ENCODE measurements at regions of chr4 and their contacts with region 1.

Region 1: DNA sequence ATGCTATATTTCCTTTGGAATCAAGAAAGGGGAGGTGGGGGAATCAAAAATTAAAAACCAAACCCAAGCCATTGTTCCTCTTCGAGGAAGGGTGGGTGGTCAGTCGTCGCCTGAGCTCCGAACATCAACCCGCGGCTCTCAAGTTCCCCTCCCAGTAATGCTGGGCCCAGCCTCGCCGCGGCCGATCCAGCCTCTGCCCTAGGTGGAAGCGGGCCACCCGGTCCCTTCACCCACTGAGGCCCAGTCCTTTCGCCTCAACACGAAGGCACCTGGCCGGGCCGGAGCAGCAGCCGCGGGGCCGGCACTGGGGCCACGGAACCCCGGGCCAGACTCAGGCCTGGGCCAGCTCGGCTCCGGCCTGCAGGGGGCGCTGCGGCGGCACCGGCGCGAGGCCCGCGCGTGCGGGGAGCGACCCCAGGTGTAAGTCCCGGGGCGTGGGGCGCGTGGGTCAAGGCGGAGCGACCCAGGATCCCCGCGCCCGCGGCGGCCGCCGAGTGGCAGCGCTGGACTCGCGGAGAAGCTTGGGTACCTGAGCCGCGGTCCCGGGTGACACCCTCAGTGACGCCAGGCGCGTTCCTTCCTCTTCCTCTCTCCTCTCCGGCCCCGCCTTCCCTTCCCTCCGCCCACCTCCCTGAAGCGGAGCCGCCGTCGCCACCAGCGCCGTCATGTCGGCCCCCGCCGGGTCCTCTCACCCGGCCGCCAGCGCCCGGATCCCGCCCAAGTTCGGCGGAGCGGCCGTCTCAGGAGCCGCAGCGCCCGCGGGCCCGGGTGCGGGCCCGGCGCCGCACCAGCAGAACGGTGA is at the start of gene SEC24B:
- DNase-seq: peak; percentile 89 to 93 (median 90)
- H3K4me3 ChIP-seq: peak within 1 kb of the TSS; percentile 44 to 75
- H3K4me3 Mint-ChIP-seq: peak within 1 kb of the TSS; percentile 88 to 95 (median 92)
- H3K27ac ChIP-seq: peak within 1 kb of the TSS; percentile 79
- H3K27ac Mint-ChIP-seq: peak within 1 kb of the TSS; percentile 92 to 98 (median 95)
- H3K4me1 ChIP-seq: peaks cover 49% of the 10 kb centered on the region
- H3K4me1 Mint-ChIP-seq: peaks cover 31 to 59% (median 45%) of the 10 kb centered on the region in 4 donors
- H3K27me3 ChIP-seq: no peaks in the 10 kb centered on the region
- H3K27me3 Mint-ChIP-seq: no peaks in the 10 kb centered on the region
- total RNA-seq, gene SEC24B: 37.0 to 37.7 TPM

Region 2: GRCh38 chr4:108906006-108906405 is 527.4 kb before region 1 on chr4:
- CTCF ChIA-PET with region 1: no interaction called
- POLR2A ChIA-PET with region 1: no interaction called
- intact Hi-C with region 1: no loop called
- DNase-seq: no peak
- H3K4me3 ChIP-seq: no peak overlapping the region
- H3K4me3 Mint-ChIP-seq: no peak overlapping the region
- H3K27ac ChIP-seq: no peak overlapping the region
- H3K27ac Mint-ChIP-seq: no peak overlapping the region
- H3K4me1 ChIP-seq: no peaks in the 10 kb centered on the region
- H3K4me1 Mint-ChIP-seq: peaks cover 0 to 8% (median 3%) of the 10 kb centered on the region in 4 donors
- H3K27me3 ChIP-seq: no peaks in the 10 kb centered on the region
- H3K27me3 Mint-ChIP-seq: peaks cover 2 to 3% of the 10 kb centered on the region in 2 donors

Region 3: DNA sequence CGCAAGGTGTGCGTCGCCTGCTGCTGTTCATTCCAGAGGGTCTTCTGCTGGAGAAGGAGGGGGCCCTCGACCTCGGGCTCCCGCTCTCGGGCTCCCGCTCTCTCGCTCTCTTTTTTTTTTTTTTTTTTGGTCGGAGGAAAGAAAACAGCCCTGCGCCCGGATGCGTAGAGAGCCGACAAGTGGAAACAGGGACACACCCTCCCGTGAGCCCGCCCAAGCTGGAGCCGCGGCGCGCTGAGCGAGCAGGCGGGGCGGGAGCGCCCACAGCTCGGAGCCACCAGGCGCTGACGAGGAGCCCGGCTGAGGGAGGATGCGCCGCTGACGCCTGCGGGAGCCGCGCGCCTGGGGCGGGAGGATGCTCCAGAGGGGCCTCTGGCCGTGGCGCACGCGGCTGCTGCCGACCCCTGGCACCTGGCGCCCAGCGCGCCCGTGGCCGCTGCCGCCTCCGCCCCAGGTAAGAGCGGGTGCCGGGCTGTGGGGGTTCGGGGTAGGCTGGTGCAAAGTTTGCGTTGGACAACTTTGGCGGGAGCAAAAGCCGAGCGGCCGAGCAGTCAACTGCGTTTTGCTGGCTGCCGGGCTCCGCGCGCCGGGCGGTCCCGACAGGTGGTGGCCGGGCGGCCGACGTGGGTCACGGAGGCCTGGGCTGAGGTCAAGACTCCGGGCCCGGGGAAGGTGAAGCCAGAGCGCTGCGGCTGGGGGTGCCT is 126.7 kb after region 1 on chr4 and contains the start of gene MCUB:
- CTCF ChIA-PET with region 1: interaction called, 13 read pairs
- POLR2A ChIA-PET with region 1: interaction called, 53 read pairs
- intact Hi-C with region 1: loop called (anchors 1 kb)
- DNase-seq: peak; percentile 93 to 95 (median 94)
- H3K4me3 ChIP-seq: peak within 1 kb of the TSS; percentile 92 to 98
- H3K4me3 Mint-ChIP-seq: peak within 1 kb of the TSS; percentile 95 to 99 (median 98)
- H3K27ac ChIP-seq: peak within 1 kb of the TSS; percentile 96
- H3K27ac Mint-ChIP-seq: peak within 1 kb of the TSS; percentile 91 to 99 (median 98)
- H3K4me1 ChIP-seq: peaks cover 54% of the 10 kb centered on the region
- H3K4me1 Mint-ChIP-seq: peaks cover 38 to 66% (median 54%) of the 10 kb centered on the region in 4 donors
- H3K27me3 ChIP-seq: no peaks in the 10 kb centered on the region
- H3K27me3 Mint-ChIP-seq: no peaks in the 10 kb centered on the region
- total RNA-seq, gene MCUB: 142 to 146 TPM

Region 4: GRCh38 chr4:109648266-109648996 is 215.0 kb after region 1 on chr4:
- CTCF ChIA-PET with region 1: interaction called, 4 read pairs
- POLR2A ChIA-PET with region 1: interaction called, 13 read pairs
- intact Hi-C with region 1: loop called (anchors 2 kb)
- DNase-seq: peak; percentile 70 to 84 (median 81)
- H3K4me3 ChIP-seq: peak overlapping the region; percentile 12 to 25
- H3K4me3 Mint-ChIP-seq: peak overlapping the region; percentile 59 to 86 (median 77)
- H3K27ac ChIP-seq: peak overlapping the region; percentile 61
- H3K27ac Mint-ChIP-seq: peak overlapping the region in 6 of 7 donors; percentile 90 to 98 (median 94)
- H3K4me1 ChIP-seq: peaks cover 82% of the 10 kb centered on the region
- H3K4me1 Mint-ChIP-seq: peaks cover 12 to 48% (median 41%) of the 10 kb centered on the region in 4 donors
- H3K27me3 ChIP-seq: no peaks in the 10 kb centered on the region
- H3K27me3 Mint-ChIP-seq: no peaks in the 10 kb centered on the region

Region 5: GRCh38 chr4:109702950-109703663 is 269.7 kb after region 1 on chr4 and contains the start of gene CASP6:
- CTCF ChIA-PET with region 1: interaction called, 11 read pairs
- POLR2A ChIA-PET with region 1: interaction called, 8 read pairs
- intact Hi-C with region 1: loop called (anchors 1 kb)
- DNase-seq: peak; percentile 72 to 83 (median 77)
- H3K4me3 ChIP-seq: peak within 1 kb of the TSS; percentile 48 to 56
- H3K4me3 Mint-ChIP-seq: peak within 1 kb of the TSS; percentile 92 to 98 (median 95)
- H3K27ac ChIP-seq: peak within 1 kb of the TSS; percentile 71
- H3K27ac Mint-ChIP-seq: peak within 1 kb of the TSS; percentile 86 to 96 (median 93)
- H3K4me1 ChIP-seq: peaks cover 47% of the 10 kb centered on the region
- H3K4me1 Mint-ChIP-seq: peaks cover 31 to 60% (median 42%) of the 10 kb centered on the region in 4 donors
- H3K27me3 ChIP-seq: no peaks in the 10 kb centered on the region
- H3K27me3 Mint-ChIP-seq: no peaks in the 10 kb centered on the region
- total RNA-seq, gene CASP6: 16.5 to 24.7 TPM

Region 6: DNA sequence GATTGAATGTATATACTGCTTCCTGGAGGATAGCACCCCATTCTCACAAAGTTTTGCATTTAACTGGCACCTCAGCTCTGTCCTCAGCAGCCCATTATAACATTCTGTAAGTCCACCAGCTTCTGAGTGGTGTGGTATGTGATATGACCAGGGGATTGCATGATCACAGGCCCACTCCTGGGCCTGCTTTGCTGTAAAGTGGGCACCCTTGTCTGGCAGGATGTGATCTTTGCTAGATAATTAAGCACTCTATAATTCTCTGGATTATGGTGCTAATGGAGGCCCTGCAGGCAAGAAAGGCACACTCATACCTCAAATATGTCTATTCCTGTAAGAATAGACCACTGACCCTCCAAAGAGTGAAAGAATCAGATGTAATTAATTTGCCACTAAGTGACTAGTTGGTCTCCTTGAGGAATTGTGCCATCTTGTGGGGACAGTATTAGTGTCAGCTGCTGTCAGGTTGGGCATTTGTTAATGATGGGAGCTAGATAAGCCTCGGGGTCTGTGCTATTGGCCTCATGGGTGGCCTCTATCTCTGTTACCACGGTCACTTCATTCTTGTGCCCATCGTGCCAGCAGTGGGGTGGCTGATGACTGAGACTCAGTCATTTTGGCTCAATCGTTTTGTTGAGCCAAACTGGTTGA is 370.6 kb after region 1 on chr4:
- CTCF ChIA-PET with region 1: interaction called, 18 read pairs
- POLR2A ChIA-PET with region 1: no interaction called
- intact Hi-C with region 1: no loop called
- DNase-seq: peak in 3 of 5 donors; percentile 16 to 29 (median 26)
- H3K4me3 ChIP-seq: no peak overlapping the region
- H3K4me3 Mint-ChIP-seq: no peak overlapping the region
- H3K27ac ChIP-seq: no peak overlapping the region
- H3K27ac Mint-ChIP-seq: no peak overlapping the region
- H3K4me1 ChIP-seq: no peaks in the 10 kb centered on the region
- H3K4me1 Mint-ChIP-seq: no peaks in the 10 kb centered on the region
- H3K27me3 ChIP-seq: no peaks in the 10 kb centered on the region
- H3K27me3 Mint-ChIP-seq: peaks cover 0 to 1% of the 10 kb centered on the region in 2 donors

Region 7: DNA sequence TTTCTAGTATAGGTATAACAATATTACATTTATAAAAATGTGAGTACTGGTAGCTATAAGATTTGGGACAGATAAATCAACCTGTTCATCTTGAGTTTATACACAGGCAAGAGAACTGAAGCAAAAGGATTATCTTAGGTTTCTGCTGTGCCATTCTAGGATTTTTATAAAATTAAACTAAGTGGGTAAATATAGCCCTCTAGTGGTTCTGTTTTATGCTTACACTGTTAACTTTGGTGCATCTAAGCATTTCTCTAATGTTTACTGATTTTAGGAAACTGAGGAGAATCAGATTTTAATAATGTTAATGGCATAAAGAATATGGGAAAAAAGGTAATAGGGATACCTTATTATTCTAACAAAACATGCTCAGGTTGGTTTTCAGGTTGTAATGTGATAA is 393.3 kb after region 1 on chr4:
- CTCF ChIA-PET with region 1: interaction called, 23 read pairs
- POLR2A ChIA-PET with region 1: no interaction called
- intact Hi-C with region 1: loop called (anchors 1 kb)
- DNase-seq: peak in 3 of 5 donors; percentile 23 to 37 (median 27)
- H3K4me3 ChIP-seq: no peak overlapping the region
- H3K4me3 Mint-ChIP-seq: no peak overlapping the region
- H3K27ac ChIP-seq: no peak overlapping the region
- H3K27ac Mint-ChIP-seq: no peak overlapping the region
- H3K4me1 ChIP-seq: no peaks in the 10 kb centered on the region
- H3K4me1 Mint-ChIP-seq: peaks cover 0 to 4% (median under 1%) of the 10 kb centered on the region in 4 donors
- H3K27me3 ChIP-seq: no peaks in the 10 kb centered on the region
- H3K27me3 Mint-ChIP-seq: no peaks in the 10 kb centered on the region

Measured in CD4-positive, alpha-beta memory T cell (primary cell).